Thyroid gland (tissue), 4 donors: ENCODE measurements at regions of chr1 and their contacts with region 1.

Region 1: GRCh38 chr1:12314333-12314903 is 84.6 kb downstream of the VPS13D start:
- DNase-seq: no peak
- H3K4me3 ChIP-seq: no peak overlapping the region
- H3K27ac ChIP-seq: peak overlapping the region in 2 of 3 donors; percentile 34 to 35
- H3K4me1 ChIP-seq: peaks cover 9 to 28% of the 10 kb centered on the region in 2 donors
- H3K27me3 ChIP-seq: no peaks in the 10 kb centered on the region
- CTCF ChIP-seq: peak in 4 of 6 experiments; percentile 25 to 71 (median 57)
- POLR2A ChIP-seq: no peak

Region 2: DNA sequence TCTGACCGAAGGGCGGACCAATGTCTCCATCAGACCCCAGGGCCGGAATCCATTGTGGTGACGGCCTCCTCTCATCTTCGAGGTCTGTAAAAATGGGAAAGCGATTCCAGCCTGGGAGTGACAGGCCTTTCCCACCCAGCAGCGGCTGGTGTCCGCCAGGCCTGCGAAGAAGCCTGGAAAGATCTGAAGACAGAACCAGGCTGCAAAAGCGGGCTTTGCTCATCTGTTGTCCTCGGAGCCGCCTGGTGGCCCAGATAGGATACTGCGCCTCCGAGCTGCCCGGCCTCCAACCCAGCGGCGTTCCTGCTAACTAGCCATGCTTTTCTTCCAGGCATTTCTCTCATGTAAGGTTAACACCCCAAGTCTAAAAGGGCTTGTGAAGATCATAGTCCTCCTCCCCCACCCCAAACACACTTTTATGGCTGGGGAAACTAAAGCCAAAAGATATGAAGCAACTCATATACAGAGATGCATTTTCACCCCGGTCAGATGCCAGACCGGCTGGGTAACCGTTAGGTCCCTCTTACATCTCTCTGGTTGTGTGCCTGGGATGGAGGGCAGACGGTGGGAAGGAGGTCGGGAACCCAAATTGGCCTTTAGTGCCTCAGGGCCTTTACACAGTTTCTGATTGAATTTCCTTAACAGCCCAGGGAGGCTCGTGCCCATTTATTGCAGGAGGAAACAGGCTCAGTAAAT is 305.5 kb after region 1 on chr1:
- intact Hi-C with region 1: loop called (anchors 5 kb)
- DNase-seq: peak; percentile 92 to 94
- H3K4me3 ChIP-seq: peak overlapping the region in 1 of 3 donors; percentile 80
- H3K27ac ChIP-seq: peak overlapping the region; percentile 99
- H3K4me1 ChIP-seq: peaks cover 50 to 55% of the 10 kb centered on the region in 2 donors
- H3K27me3 ChIP-seq: no peaks in the 10 kb centered on the region
- CTCF ChIP-seq: peak; percentile 93 to 98 (median 96)
- POLR2A ChIP-seq: no peak

Region 3: GRCh38 chr1:12658531-12659453 is 344.4 kb after region 1 on chr1:
- intact Hi-C with region 1: loop called (anchors 5 kb)
- DNase-seq: peak; percentile 69 to 73
- H3K4me3 ChIP-seq: no peak overlapping the region
- H3K27ac ChIP-seq: no peak overlapping the region
- H3K4me1 ChIP-seq: no peaks in the 10 kb centered on the region
- H3K27me3 ChIP-seq: no peaks in the 10 kb centered on the region
- CTCF ChIP-seq: peak; percentile 87 to 99 (median 93)
- POLR2A ChIP-seq: no peak